Mammary epithelial cell (primary cell): ENCODE measurements at regions of chr5 and their contacts with region 1.

Region 1: GRCh38 chr5:179763215-179763945 is 30.4 kb upstream of the LTC4S start:
- DNase-seq: peak; percentile 75
- H3K4me3 ChIP-seq: no peak overlapping the region
- H3K27ac ChIP-seq: no peak overlapping the region
- H3K4me1 ChIP-seq: peaks cover 47% of the 10 kb centered on the region
- H3K27me3 ChIP-seq: no peaks in the 10 kb centered on the region
- CTCF ChIP-seq: peak; percentile 85 to 94

Region 2: DNA sequence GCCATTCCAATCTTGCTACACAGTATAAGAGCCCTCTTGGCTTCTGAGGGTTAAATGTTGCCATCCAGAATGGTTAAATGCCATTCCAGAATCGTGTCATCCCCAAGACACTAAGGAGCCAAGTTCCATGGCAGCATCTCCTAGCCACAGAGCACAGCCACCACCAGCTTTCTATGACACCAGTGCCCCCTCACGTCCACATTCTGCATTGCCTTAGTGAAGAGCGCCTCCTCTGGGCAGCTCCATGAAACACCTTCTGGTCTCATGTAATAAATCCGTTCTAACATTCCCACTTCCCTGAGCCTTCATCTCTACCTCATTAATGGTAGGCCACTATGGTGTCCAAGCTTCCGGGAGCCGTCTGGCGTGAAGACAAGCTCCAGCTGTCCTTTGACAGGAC is 95.0 kb before region 1 on chr5:
- CTCF ChIA-PET with region 1: no interaction called
- dilution Hi-C with region 1: loop called (anchors 5 kb)
- in situ Hi-C with region 1: no loop called
- intact Hi-C with region 1: no loop called
- DNase-seq: peak; percentile 30
- H3K4me3 ChIP-seq: no peak overlapping the region
- H3K27ac ChIP-seq: no peak overlapping the region
- H3K4me1 ChIP-seq: no peaks in the 10 kb centered on the region
- H3K27me3 ChIP-seq: no peaks in the 10 kb centered on the region
- CTCF ChIP-seq: peak; percentile 80 to 92

Region 3: GRCh38 chr5:179795863-179796833 is 32.8 kb after region 1 on chr5:
- CTCF ChIA-PET with region 1: interaction called, 4 read pairs
- dilution Hi-C with region 1: no loop called
- in situ Hi-C with region 1: no loop called
- intact Hi-C with region 1: loop called (anchors 1 kb)
- DNase-seq: peak; percentile 86
- H3K4me3 ChIP-seq: peak overlapping the region; percentile 38 to 73 (median 57)
- H3K27ac ChIP-seq: peak overlapping the region; percentile 27
- H3K4me1 ChIP-seq: peaks cover 42% of the 10 kb centered on the region
- H3K27me3 ChIP-seq: no peaks in the 10 kb centered on the region
- CTCF ChIP-seq: peak; percentile 27 to 60

Region 4: GRCh38 chr5:179827680-179828079 is 64.3 kb after region 1 on chr5:
- CTCF ChIA-PET with region 1: no interaction called
- dilution Hi-C with region 1: loop called (anchors 5 kb)
- in situ Hi-C with region 1: no loop called
- intact Hi-C with region 1: no loop called
- DNase-seq: peak; percentile 40
- H3K4me3 ChIP-seq: no peak overlapping the region
- H3K27ac ChIP-seq: no peak overlapping the region
- H3K4me1 ChIP-seq: peaks cover 2% of the 10 kb centered on the region
- H3K27me3 ChIP-seq: no peaks in the 10 kb centered on the region
- CTCF ChIP-seq: no peak

Region 5: DNA sequence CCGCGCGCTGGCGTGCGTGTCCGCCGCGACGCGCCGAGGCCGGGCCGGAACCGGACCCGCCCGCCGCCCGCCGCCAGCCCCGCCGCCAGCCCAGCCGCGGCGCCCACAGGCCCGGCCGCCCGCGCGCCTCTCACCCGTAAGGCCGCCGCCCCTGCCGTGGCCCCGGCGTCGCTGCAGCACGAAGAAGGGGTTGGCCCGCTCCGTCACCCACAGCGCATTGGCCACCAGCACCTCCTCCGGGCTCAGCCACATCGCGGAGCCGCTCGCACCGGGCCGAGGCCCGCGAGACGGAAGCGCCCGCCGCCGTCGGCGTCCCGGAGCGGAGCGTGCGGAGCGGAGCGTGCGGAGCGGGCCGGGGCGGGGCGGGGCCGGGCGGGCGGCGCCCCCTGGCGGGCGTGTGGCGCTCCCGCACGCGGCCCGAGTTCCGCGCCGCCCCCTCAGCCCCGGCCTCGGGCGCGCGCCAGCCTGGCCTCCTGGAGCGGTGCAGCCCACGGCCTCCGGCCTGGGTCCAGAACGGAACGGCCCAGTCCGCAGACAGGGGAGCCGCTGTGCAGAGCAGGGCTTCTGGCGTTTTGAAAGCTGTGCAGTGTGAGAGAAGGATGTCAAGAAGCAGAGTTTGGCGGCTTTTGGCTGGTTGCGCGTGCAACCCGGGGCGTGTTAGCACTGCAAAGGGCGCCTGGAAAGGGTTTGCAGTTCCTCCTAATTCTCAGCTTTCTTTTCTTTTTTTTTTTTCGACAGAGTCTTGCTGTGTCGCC is 144.4 kb after region 1 on chr5 and contains the start of gene TBC1D9B:
- CTCF ChIA-PET with region 1: no interaction called
- dilution Hi-C with region 1: no loop called
- in situ Hi-C with region 1: no loop called
- intact Hi-C with region 1: loop called (anchors 2 kb)
- DNase-seq: peak; percentile 60
- H3K4me3 ChIP-seq: peak within 1 kb of the TSS; percentile 82 to 94 (median 91)
- H3K27ac ChIP-seq: peak within 1 kb of the TSS; percentile 44
- H3K4me1 ChIP-seq: peaks cover 13% of the 10 kb centered on the region
- H3K27me3 ChIP-seq: no peaks in the 10 kb centered on the region
- CTCF ChIP-seq: peak; percentile 23 to 24
- total RNA-seq, gene TBC1D9B: 71.0 to 112 TPM